ENCODE measurements at regions of chr2 and their contacts with region 1.

Region 1: GRCh38 chr2:176638167-176639015 is 369.1 kb downstream of the MTX2 start:
- DNase-seq: peak; percentile 48 to 69
- H3K4me3 ChIP-seq: peak overlapping the region; percentile 31
- H3K4me3 Mint-ChIP-seq: peak overlapping the region; percentile 55
- H3K27ac Mint-ChIP-seq: no peak overlapping the region
- H3K4me1 ChIP-seq: no peaks in the 10 kb centered on the region
- H3K4me1 Mint-ChIP-seq: no peaks in the 10 kb centered on the region
- H3K27me3 ChIP-seq: no peaks in the 10 kb centered on the region; the same call in 1 of the 2 replicates
- H3K27me3 Mint-ChIP-seq: peaks cover 21% of the 10 kb centered on the region
- CTCF ChIP-seq: peak; percentile 72 to 82

Region 2: DNA sequence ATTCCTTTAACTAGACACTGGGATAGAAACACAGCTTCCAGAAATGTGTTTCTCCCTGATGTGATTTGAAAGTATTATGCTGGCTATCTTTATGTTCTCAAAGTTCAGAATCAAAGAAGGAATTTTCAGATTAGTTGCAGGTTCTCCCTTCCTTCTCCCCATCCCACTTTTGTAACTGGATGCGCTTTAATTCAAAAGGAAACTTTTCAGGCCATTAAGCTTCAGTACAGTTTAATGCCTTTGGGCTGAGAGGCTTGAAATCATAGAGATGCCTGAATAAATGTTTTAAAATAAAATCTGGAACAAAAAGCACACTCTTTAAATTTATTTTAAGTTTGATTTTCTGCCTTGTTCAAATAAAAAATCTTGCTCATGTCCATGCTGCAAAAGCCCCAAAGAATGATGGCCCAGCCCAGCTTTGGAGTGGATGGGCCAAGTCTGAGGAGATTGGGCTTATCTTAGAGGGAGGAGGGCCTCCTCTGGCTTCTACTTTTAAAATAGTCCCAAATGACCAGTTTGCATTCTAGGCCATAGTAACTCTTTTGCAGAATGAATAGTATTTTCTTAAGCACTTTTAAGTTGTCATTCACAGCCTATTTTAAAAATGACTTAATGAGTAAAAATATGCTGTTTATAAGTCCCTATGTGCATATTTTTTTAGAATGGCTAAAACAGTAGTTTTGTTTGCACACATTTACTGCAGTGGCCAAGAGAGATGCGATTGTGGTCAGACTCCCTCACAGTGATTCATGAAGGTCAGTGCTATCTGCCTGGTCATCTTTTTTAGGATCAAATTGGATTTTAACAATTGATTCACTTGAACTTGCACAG is 239.9 kb before region 1 on chr2:
- CTCF ChIA-PET with region 1: no interaction called
- POLR2A ChIA-PET with region 1: no interaction called
- intact Hi-C with region 1: loop called (anchors 10 kb)
- DNase-seq: no peak
- H3K4me3 ChIP-seq: no peak overlapping the region
- H3K4me3 Mint-ChIP-seq: no peak overlapping the region
- H3K27ac Mint-ChIP-seq: no peak overlapping the region
- H3K4me1 ChIP-seq: no peaks in the 10 kb centered on the region
- H3K4me1 Mint-ChIP-seq: peaks cover 6% of the 10 kb centered on the region
- H3K27me3 ChIP-seq: no peaks in the 10 kb centered on the region
- H3K27me3 Mint-ChIP-seq: peaks cover 11% of the 10 kb centered on the region
- CTCF ChIP-seq: no peak

Region 3: DNA sequence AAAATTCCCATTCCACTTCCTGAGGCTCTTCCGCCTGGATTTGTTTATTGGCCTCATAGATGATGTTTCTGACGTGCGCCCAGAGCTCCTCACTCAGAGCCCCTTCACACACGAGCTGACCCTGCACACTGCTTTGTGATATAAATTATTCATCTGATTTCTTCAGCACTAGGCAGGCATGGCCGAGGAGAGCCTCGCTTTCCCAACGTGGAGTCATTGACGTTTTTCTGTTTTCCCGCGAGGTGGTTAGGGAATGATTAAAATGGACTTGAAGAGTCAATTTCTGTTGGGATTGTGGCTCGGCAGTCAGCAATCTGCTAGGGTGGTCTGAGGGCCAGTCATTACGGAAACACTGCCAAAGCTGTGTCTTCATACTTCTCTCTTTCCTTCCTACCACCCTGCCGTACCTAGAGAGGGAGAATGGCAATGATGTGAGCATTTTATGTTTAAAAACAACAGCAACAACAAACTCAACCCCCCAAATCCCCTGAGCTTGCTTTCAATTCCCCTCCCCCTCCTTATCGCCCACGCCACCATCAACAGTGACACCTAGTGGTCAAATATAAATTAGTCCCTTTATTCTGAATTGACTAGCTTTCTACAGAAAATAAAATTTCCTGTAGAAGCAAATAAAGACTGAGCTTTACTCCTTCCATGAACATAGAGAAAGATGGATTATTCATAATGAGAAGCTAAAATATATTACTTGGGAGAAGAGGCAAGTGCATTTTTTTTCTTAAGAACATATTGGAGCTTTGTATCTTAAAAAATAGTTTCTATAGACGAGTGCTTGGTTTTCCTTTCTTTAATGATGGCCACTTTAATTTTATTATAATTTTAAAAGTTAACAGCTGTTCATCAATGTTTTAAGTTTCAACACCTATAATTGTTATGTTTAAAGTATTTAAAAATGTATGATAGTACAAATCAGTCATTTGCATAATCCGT is 84.0 kb before region 1 on chr2:
- CTCF ChIA-PET with region 1: no interaction called
- POLR2A ChIA-PET with region 1: no interaction called
- intact Hi-C with region 1: no loop called
- DNase-seq: peak in 1 of 2 experiments; percentile 43
- H3K4me3 ChIP-seq: no peak overlapping the region
- H3K4me3 Mint-ChIP-seq: peak overlapping the region; percentile 57
- H3K27ac Mint-ChIP-seq: no peak overlapping the region
- H3K4me1 ChIP-seq: 0 out of 2 replicates have a peak, but pooled peaks cover 4% of the 10 kb centered on the region
- H3K4me1 Mint-ChIP-seq: no peaks in the 10 kb centered on the region
- H3K27me3 ChIP-seq: no peaks in the 10 kb centered on the region; the same call in 1 of the 2 replicates
- H3K27me3 Mint-ChIP-seq: peaks cover 9% of the 10 kb centered on the region
- CTCF ChIP-seq: peak; percentile 65 to 78

Region 4: DNA sequence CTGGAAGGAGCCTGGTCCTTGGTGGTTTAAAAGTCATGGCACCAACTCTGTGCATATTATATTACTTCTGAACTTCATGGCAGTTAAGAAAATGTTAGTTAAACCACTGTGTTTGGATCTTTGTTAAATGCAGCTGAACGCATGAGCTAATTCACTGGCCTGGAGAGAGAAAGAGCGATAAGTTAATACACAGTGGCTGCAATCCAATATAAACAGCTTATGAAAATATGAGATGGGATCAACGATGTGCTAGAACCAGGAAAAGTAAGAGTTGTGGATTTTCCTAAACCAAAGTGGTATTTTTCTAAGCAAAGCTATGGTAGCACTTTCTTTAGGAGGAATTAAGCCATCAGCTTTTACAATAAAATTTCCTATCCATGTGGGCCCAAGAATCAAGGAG is 42.4 kb before region 1 on chr2:
- CTCF ChIA-PET with region 1: no interaction called
- POLR2A ChIA-PET with region 1: no interaction called
- intact Hi-C with region 1: no loop called
- DNase-seq: no peak
- H3K4me3 ChIP-seq: no peak overlapping the region
- H3K4me3 Mint-ChIP-seq: no peak overlapping the region
- H3K27ac Mint-ChIP-seq: no peak overlapping the region
- H3K4me1 ChIP-seq: no peaks in the 10 kb centered on the region
- H3K4me1 Mint-ChIP-seq: no peaks in the 10 kb centered on the region
- H3K27me3 ChIP-seq: no peaks in the 10 kb centered on the region
- H3K27me3 Mint-ChIP-seq: peaks cover 25% of the 10 kb centered on the region
- CTCF ChIP-seq: no peak

Region 5: DNA sequence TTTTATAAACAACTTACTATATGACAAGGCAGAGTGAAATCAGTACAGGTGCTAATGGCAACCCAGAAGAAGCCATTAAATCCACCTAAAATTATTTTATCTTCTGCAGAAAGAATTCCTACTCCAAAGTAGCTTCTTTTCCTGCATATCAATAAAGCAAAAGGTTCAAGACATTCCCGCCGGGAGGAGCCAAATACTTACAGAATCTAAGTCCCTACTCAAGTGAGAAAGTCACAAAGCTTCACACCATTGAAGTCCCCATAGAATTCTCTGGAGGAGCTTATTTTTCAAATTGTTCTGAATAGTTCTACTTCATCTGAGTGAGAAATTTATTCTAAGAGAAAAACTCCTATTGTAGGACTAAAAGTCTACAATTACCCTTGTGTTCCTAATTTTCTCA is 340.5 kb after region 1 on chr2:
- CTCF ChIA-PET with region 1: no interaction called
- POLR2A ChIA-PET with region 1: no interaction called
- intact Hi-C with region 1: no loop called
- DNase-seq: peak in 1 of 2 experiments; percentile 12
- H3K4me3 ChIP-seq: no peak overlapping the region
- H3K4me3 Mint-ChIP-seq: no peak overlapping the region
- H3K27ac Mint-ChIP-seq: no peak overlapping the region
- H3K4me1 ChIP-seq: no peaks in the 10 kb centered on the region
- H3K4me1 Mint-ChIP-seq: no peaks in the 10 kb centered on the region
- H3K27me3 ChIP-seq: no peaks in the 10 kb centered on the region
- H3K27me3 Mint-ChIP-seq: peaks cover 13% of the 10 kb centered on the region
- CTCF ChIP-seq: peak; percentile 16 to 24